H1 (cell line): ENCODE measurements at regions of chr10 and their contacts with region 1.

Region 1: DNA sequence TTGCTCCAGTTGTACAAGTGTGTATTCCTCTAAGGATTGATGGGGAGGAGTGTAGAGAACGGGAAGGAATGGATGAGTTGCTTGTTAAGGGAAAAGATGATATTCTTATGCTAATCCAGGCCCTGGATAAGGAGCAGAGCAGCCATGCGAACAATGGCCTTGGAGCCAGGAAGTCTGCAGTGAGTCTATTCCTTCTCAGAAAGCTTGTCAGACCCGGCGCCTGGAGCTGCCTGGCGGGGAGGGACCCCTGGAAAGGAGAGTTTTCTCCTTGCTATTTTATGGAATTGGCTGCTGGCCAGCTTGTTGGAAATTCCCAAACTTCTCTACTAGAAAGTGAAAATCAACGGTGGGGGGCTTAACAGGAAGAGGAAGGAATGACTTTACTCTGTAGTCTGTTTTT is 89.1 kb downstream of the MMRN2 start:
- DNase-seq: peak in 1 of 2 experiments; percentile 79
- H3K4me3 ChIP-seq: peak overlapping the region in 1 of 4 experiments; percentile 28; a peak in 1 of 8 replicates
- H3K27ac ChIP-seq: peak overlapping the region; percentile 40
- H3K4me1 ChIP-seq: peaks cover 8 to 37% (median 34%) of the 10 kb centered on the region in 4 experiments
- H3K27me3 ChIP-seq: no peaks in the 10 kb centered on the region
- CTCF ChIP-seq: no peak
- EP300 ChIP-seq: peak in 1 of 2 experiments; percentile 75; a peak in 1 of 3 replicates
- POLR2A ChIP-seq: no peak
- RAD21 ChIP-seq: peak; percentile 14 to 18; a peak in 1 of 4 replicates

Region 2: GRCh38 chr10:86851329-86852207 is 16.8 kb before region 1 on chr10:
- CTCF ChIA-PET with region 1: interaction called, 4 read pairs
- POLR2A ChIA-PET with region 1: interaction called, 11 read pairs
- DNase-seq: no peak
- H3K4me3 ChIP-seq: no peak overlapping the region
- H3K27ac ChIP-seq: no peak overlapping the region
- H3K4me1 ChIP-seq: peaks cover 6 to 18% (median 9%) of the 10 kb centered on the region in 4 experiments; a peak in 5 of 7 replicates
- H3K27me3 ChIP-seq: no peaks in the 10 kb centered on the region
- CTCF ChIP-seq: no peak
- EP300 ChIP-seq: no peak
- POLR2A ChIP-seq: no peak
- RAD21 ChIP-seq: no peak